Right ventricle myocardium inferior (tissue), 1 donor: ENCODE measurements at regions of chr12 and their contacts with region 1.

Region 1: DNA sequence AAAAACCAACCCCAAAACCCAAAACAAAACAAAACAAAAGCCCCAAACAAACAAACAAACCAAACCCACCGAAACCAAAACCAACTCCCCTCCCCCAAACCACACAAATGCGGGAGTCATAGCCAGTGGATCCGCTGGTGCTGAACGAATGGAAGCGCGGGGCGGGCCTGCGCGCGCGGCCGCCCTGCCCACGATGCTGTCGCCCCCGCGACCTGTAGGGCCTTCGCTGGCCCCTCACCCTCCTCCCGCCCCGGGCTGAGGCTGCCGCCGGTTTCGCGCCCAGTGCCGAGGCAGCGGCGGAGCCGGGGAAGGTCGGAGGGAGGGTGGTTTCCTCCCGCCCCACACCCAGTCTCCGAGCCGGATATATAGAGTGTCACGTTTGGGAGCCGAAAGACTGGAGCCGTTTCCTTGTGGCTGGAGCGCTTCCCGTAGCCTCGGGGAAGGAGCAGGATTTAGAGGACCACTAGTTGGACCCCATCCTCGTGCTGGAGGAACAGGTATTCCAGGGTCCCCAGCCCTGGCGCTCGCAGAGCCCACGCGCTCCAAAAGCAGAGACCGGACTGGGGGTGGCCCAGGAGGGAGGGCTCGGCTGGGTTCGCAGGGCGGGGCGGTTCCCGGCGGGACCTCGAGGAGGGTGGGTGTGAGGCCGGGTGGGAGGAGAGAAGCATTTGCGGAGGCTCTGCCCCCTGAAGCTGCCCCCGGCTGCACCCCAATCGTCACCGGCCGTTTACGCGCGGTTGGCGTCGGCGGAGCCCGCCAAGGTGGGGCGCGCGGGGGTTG is at the start of gene FAR2:
- DNase-seq: peak; percentile 78
- ATAC-seq: peak; percentile 77
- total RNA-seq, gene FAR2: 4.1 TPM

Region 2: GRCh38 chr12:29241821-29242591 is 92.9 kb after region 1 on chr12:
- intact Hi-C with region 1: loop called (anchors 10 kb)
- DNase-seq: peak; percentile 64
- ATAC-seq: peak; percentile 97